HEK293 (cell line): ENCODE measurements at regions of chr19 and their contacts with region 1.

Region 1: DNA sequence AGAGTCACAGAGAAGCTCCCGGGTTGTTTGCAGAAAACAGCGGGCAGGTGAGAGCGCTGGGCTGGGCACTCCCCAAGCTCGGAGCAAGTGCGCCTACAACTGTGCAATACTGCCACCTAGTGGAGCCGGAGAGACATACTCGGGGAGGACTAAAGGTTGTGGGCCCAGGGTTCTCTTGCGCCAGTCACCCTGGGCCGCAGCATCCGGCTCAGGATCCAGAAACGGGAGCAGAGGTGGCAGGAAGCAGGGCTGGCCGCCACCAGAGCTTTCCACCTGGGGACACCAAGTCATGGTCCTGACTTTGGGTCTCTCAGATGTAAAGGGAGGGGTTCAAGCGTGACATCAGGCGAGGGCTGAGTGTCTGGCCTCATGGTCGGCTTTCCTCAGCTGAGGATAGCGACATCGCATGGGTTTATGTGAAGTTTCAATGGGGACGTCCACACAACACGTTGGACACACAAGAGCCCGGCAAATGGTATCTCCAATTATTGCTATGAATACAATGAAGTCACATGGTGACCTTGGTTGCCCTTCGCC is 11.2 kb upstream of the KLK4 start:
- H3K4me3 ChIP-seq: no peak overlapping the region
- H3K27ac ChIP-seq: no peak overlapping the region
- H3K4me1 ChIP-seq: peaks cover 3% of the 10 kb centered on the region
- CTCF ChIP-seq: peak; percentile 84

Region 2: GRCh38 chr19:50437862-50438449 is 484.4 kb before region 1 on chr19:
- CTCF ChIA-PET with region 1: no interaction called
- POLR2A ChIA-PET with region 1: no interaction called
- H3K4me3 ChIP-seq: no peak overlapping the region
- H3K27ac ChIP-seq: no peak overlapping the region
- H3K4me1 ChIP-seq: peaks cover 7% of the 10 kb centered on the region
- CTCF ChIP-seq: no peak

Region 3: GRCh38 chr19:50705422-50706019 is 216.9 kb before region 1 on chr19:
- CTCF ChIA-PET with region 1: interaction called, 26 read pairs
- POLR2A ChIA-PET with region 1: no interaction called
- H3K4me3 ChIP-seq: no peak overlapping the region
- H3K27ac ChIP-seq: no peak overlapping the region
- H3K4me1 ChIP-seq: no peaks in the 10 kb centered on the region
- CTCF ChIP-seq: peak; percentile 49; the same call in 1 of the 2 replicates

Region 4: DNA sequence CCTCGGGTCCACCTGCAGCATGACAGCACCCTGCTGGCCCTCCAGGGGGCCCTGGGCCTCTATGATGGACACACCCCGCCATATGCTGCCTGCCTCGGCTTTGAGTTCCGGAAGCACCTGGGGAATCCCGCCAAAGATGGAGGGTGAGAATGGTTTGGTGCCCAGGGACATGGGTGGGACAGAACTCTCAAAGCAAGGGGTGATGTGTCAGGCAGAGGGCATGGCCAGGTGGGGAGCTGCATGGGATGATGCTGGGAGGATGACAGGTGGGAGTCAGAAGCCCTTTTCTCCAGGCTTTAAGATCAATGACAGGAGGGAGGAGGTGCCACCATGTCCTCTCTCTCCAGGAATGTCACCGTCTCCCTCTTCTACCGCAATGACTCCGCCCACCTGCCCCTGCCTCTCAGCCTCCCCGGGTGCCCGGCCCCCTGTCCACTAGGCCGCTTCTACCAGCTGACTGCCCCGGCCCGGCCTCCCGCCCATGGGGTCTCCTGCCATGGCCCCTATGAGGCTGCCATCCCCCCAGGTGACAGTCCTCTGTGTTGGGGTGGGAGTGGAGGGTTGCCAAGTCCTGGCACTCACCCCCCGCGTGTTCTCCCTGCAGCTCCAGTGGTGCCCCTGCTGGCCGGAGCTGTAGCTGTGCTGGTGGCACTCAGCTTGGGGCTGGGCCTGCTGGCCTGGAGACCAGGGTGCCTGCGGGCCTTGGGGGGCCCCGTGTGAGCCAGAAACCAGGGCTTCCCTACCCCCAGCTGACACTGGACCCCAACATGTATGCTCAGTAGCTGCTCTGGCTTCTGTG is 127.7 kb before region 1 on chr19:
- CTCF ChIA-PET with region 1: interaction called, 79 read pairs
- POLR2A ChIA-PET with region 1: interaction called, 31 read pairs
- H3K4me3 ChIP-seq: no peak overlapping the region
- H3K27ac ChIP-seq: no peak overlapping the region; the same call in 1 of the 2 replicates
- H3K4me1 ChIP-seq: peaks cover 4% of the 10 kb centered on the region; the same call in 1 of the 2 replicates
- CTCF ChIP-seq: peak; percentile 77

Region 5: GRCh38 chr19:50893047-50893737 is 29.2 kb before region 1 on chr19:
- CTCF ChIA-PET with region 1: interaction called, 18 read pairs
- POLR2A ChIA-PET with region 1: no interaction called
- H3K4me3 ChIP-seq: no peak overlapping the region
- H3K27ac ChIP-seq: no peak overlapping the region
- H3K4me1 ChIP-seq: no peaks in the 10 kb centered on the region; the same call in 1 of the 2 replicates
- CTCF ChIP-seq: peak; percentile 16; the same call in 1 of the 2 replicates

Region 6: DNA sequence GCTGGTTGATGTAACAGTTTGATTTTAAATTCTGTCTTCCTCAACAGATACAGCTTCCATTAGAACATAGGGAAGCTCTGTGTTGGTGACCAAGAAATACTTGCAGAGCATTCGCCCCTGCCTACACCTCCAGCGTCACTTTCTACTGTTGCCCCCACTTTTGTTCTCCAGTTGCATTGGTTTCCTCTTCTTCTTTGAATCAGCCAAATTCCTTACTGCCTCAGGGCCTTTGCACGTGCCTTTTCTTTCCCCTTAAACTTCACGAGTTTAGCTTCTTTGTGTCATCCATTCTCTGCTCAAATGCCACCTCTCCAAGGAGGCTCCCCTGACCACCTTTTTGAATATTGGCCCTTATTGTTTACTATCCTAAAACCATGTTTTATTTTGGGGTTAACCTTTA is 24.7 kb after region 1 on chr19:
- CTCF ChIA-PET with region 1: interaction called, 14 read pairs
- POLR2A ChIA-PET with region 1: no interaction called
- H3K4me3 ChIP-seq: no peak overlapping the region
- H3K27ac ChIP-seq: no peak overlapping the region
- H3K4me1 ChIP-seq: no peaks in the 10 kb centered on the region
- CTCF ChIP-seq: no peak

Region 7: GRCh38 chr19:51079481-51080110 is 157.2 kb after region 1 on chr19:
- CTCF ChIA-PET with region 1: no interaction called
- POLR2A ChIA-PET with region 1: no interaction called
- H3K4me3 ChIP-seq: no peak overlapping the region
- H3K27ac ChIP-seq: no peak overlapping the region
- H3K4me1 ChIP-seq: no peaks in the 10 kb centered on the region
- CTCF ChIP-seq: no peak